Panc1 (cell line): ENCODE measurements at regions of chr18 and their contacts with region 1.

Region 1: GRCh38 chr18:47316924-47317323 is 65.5 kb upstream of the SKOR2 start:
- DNase-seq: no peak
- ATAC-seq: no peak
- H3K4me3 ChIP-seq: no peak overlapping the region
- H3K27ac ChIP-seq: no peak overlapping the region
- H3K4me1 ChIP-seq: no peaks in the 10 kb centered on the region
- H3K27me3 ChIP-seq: no peaks in the 10 kb centered on the region
- CTCF ChIP-seq: no peak

Region 2: DNA sequence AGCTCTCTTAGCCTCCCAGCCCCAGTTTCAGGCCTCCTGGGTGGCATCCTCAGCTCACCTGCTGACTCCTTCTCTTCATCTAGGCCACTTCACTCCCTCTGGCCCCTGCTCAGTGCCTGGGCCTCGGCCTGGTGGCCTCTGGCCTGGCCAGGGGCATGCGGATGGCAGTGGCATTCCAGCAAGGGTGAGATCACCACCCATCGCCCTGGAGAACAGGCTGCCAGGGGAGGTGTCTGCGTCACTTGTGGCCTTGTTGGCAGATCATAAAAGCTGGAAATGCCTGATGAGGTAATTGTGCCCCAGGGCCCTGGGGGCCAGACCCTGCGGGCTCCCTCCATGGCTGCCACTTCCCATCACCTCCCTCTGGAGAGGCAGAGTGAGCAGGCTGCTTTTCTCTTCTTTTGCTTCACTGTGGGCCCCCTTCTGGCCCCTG is 686.0 kb after region 1 on chr18:
- CTCF ChIA-PET with region 1: interaction called, 10 read pairs
- POLR2A ChIA-PET with region 1: no interaction called
- in situ Hi-C with region 1: no loop called
- intact Hi-C with region 1: no loop called
- DNase-seq: peak; percentile 72
- ATAC-seq: peak; percentile 86
- H3K4me3 ChIP-seq: no peak overlapping the region
- H3K27ac ChIP-seq: peak overlapping the region; percentile 63
- H3K4me1 ChIP-seq: peaks cover 9% of the 10 kb centered on the region
- H3K27me3 ChIP-seq: no peaks in the 10 kb centered on the region
- CTCF ChIP-seq: no peak